Dendritic cell treated with granulocyte-macrophage colony-stimulating factor and Interleukin-4, amounts not matched to agents 40 ng/mL and 50 ng/mL, for 4 days (primary cell): ENCODE measurements at regions of chr7 and their contacts with region 1.

Region 1: DNA sequence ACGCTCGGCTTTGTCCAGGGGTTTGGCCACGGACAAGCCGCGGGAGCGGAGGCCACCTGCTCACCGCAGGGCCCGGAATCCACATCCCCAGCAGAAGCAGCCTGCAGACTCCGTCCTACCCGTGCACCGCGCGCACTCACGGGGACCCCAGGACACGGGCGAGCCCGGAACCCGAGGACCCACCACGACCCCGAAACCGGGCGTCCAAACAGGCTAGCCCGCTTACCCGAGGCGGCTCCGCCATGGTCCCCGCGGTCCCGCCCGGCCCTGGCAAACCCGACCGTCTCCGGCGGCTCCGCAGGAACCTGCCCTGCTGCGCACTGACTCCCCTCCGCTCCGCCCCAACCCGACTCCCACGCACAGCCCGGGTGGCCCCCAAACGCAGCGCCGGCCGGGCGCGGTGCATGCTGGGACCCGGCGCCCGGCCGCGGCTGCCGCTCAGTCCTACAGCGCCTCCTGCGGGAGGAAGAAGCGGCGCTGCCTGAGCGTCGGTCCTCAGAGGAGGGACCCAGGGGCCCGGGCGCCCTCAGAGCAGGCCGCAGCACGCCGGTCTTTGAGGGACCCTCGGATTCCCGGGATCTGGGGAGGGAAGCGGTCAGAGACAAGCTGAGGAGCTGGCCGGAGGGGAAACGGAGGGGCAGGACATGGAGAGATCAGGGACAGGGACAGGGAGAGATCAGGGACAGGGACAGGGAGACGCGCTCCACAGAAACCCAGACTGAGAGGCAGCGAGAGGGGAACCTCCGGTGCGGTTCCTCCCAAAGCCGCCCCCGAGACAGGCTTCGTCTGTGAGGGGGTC is at the start of gene ZNF786:
- H3K4me3 Mint-ChIP-seq: peak within 1 kb of the TSS; percentile 98
- H3K27ac Mint-ChIP-seq: peak within 1 kb of the TSS; percentile 90
- H3K4me1 Mint-ChIP-seq: peaks cover 42% of the 10 kb centered on the region
- H3K27me3 Mint-ChIP-seq: no peaks in the 10 kb centered on the region

Region 2: DNA sequence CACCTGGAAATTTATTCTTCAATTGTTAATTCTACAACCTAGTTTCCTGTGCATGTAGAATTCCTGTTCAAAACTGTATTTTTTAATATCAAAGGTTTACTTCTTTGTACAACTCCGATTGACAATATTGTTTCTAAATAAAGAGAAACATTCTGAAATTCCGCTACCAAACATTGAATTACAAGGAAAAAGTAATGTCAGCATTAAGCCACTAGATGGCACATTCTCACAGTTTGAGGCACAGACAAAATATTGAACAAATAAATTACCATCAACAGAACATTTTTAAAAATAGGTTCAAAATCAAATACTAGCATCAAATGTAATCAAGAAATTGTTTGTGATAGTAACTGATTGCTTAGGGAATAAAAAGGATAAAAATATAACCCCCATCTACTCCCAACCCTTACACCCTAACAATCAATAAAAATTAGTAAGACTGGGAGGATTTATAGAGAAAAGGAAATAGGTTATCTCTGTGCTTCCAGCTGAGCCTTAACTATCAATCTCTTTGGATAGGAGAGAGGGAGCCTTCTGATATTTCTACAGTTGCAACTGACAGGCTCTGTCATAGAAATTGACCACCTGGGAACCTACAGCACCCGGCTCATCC is 586.6 kb before region 1 on chr7:
- intact Hi-C with region 1: loop called (anchors 10 kb)
- H3K4me3 Mint-ChIP-seq: no peak overlapping the region
- H3K27ac Mint-ChIP-seq: no peak overlapping the region
- H3K4me1 Mint-ChIP-seq: peaks cover 8% of the 10 kb centered on the region
- H3K27me3 Mint-ChIP-seq: peaks cover 19% of the 10 kb centered on the region

Region 3: DNA sequence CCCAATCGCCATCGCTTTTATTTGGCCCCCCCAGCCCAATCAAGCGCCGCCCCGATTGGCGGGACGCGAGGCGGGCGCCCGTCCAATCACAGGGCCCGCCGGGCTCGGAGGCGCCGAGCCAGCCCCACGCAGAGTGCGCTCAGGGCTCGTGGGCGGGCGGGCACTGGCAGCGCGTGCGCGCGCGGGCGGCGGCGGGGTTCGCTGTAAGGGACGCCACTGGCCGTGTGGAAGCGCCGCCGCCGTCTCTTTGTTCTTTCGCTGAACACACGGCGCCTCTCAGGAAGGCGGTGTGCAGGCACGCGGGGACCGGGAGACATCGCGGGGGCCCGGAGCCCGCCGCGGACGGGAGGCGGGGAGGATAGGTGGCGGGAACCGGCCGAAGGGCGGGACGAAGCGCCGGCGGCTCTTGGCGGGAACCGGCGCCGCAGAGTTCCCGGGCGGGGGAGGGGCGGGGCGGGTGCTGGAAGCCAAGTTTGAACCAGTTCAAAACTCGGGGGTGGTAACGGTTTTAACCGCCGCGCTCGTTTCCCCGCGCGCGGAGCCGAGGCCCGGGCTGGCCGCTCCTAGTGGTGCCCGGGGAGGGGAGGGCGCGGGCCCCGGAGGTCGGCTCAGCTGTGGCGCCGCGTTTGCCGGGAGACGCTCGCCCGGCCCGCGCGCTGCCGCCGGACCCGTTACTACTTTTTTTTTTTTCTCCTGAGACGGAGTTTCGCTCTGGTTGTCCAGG is 206.1 kb before region 1 on chr7:
- intact Hi-C with region 1: loop called (anchors 5 kb)
- H3K4me3 Mint-ChIP-seq: peak overlapping the region; percentile 80
- H3K27ac Mint-ChIP-seq: peak overlapping the region; percentile 88
- H3K4me1 Mint-ChIP-seq: peaks cover 21% of the 10 kb centered on the region
- H3K27me3 Mint-ChIP-seq: no peaks in the 10 kb centered on the region

Region 4: DNA sequence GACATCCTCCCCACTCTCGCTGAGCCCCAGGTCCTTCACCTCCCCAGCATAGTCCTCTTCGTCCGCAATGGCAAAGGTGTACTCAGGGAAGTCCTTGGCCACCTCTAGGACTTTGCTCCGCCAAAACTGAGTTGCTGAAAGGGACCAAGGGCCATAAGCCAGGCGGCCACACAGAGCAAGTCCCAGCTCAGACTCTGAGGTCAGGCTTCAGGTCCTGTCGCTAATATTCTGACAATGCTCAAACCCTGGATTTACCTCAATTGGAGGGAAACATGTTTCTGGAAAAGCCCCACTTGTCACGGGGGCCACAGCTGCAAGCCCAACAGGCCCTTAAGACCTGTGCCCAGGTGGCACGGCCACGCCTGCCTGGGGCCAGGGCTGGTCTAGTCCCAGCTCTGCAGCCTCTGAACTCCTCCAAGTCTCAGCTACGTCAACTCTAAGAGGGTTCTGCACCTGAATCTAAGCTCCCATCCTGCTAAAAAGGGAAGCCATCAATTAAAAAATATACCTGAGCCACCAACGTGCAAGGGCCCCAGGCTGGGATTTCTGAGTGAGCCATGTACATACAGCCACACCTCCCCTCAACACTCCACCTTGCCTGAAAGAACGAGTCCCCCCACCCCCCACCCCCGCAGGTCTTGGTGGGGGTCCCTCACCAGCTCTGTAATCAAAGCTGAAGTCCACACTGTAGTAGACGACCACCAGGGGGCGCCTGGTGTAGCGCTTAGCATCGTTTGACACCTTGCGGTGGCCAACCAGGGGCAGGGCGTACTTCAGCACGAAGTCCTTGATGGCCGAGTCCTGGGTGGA is 85.2 kb before region 1 on chr7:
- intact Hi-C with region 1: loop called (anchors 1 kb)
- H3K4me3 Mint-ChIP-seq: no peak overlapping the region
- H3K27ac Mint-ChIP-seq: no peak overlapping the region
- H3K4me1 Mint-ChIP-seq: no peaks in the 10 kb centered on the region
- H3K27me3 Mint-ChIP-seq: no peaks in the 10 kb centered on the region

Region 5: DNA sequence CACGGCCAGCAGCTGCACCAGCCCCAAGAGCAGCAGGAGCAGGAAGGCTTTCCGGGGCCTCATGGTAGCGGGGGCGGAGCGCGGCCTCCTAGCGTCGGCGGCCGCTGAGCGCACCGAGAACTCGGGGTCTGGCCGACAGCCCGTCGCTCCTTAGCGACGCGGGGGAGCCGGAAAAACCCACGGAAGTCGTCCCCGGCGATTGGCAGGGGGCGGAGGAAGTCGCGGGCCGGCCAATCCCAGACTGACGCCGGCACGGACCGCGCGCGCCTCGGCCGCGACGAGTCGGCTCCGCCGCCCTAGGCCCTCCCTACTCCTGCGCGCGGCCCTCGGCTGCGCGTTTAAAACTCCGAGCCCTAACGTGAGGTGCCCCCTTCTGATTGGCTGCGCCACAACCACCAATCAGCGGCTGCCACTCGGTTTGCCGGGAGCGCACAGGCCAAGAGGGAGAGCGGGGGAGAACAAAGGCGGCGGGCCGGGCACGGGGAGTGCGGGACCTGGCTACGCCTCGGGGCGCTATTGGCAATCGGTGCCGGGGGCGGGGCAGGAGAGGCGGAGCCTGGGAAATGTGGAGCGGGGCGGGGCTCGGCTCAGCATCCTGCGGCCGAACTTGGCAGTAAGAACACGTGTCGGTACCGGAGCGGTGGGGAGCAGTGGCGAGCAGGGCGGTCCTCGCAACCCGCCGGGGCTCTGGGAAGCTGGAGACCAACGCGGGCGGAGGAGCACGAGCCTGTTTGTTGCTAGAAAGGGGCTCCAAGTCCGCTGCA is 62.1 kb before region 1 on chr7 and contains the start of gene PDIA4:
- intact Hi-C with region 1: loop called (anchors 2 kb)
- H3K4me3 Mint-ChIP-seq: peak within 1 kb of the TSS; percentile 96
- H3K27ac Mint-ChIP-seq: peak within 1 kb of the TSS; percentile 97
- H3K4me1 Mint-ChIP-seq: peaks cover 35% of the 10 kb centered on the region
- H3K27me3 Mint-ChIP-seq: peaks cover 5% of the 10 kb centered on the region

Region 6: DNA sequence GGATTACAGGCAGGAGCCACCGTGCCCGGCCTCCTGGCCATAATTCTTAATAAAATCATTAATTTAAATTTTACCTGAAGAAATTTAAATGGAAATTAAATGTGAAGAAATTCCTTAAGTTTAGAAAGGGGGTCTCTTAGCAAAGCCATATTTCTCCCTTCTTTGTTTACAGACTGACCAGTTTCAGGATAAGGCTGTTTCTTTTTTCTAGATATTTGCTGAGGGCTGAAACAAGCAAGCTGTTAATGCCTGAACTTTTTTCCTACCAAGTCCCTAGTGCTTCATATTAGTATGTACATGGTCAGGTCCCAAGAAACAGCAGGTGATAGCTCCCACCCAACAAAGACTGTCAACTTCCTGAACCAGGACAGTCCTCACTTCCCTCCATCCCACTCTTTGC is 44.2 kb before region 1 on chr7:
- intact Hi-C with region 1: no loop called
- H3K4me3 Mint-ChIP-seq: peak overlapping the region; percentile 17
- H3K27ac Mint-ChIP-seq: peak overlapping the region; percentile 85
- H3K4me1 Mint-ChIP-seq: peaks cover 27% of the 10 kb centered on the region
- H3K27me3 Mint-ChIP-seq: peaks cover 1% of the 10 kb centered on the region

Region 7: DNA sequence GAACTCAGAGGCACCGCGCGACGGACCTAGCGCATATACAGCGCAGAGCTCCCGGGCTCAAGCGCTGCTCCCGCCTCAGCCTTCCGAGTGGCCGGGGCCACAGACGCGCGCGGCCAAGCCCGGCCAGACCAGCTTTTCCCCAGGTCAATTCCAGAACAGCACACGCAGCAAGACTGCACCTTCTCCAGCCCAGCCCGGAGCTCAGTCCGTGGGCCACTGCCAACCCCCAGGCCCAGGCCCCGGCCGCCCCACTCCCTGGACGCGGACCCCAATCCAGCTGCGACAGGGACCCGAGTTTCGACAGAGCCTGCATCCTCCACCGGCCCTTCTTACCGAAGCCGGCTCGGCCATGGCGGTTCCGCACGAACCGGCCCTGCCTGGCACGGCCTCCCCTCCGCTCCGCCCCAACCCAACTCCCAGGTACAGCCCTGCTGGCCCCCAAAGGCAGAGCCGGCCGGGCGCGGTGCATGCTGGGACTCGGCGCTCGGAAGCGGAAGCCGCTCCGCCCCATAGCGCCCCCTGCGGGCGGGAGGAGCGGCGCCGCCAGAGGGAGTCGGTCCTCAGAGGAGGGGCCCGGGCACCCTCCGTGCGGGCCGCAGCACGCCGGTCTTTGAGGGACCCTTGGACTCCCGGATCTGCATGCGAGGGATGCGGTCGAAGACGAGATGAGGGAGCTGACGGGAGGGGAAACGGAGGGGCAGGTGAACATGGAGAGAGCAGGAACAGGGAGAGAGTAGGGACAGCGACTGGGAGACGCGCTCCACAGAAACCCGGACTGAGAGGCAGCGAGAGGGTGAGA is 35.5 kb after region 1 on chr7 and contains the start of gene ZNF425:
- intact Hi-C with region 1: loop called (anchors 2 kb)
- H3K4me3 Mint-ChIP-seq: peak within 1 kb of the TSS; percentile 99
- H3K27ac Mint-ChIP-seq: peak within 1 kb of the TSS; percentile 93
- H3K4me1 Mint-ChIP-seq: peaks cover 32% of the 10 kb centered on the region
- H3K27me3 Mint-ChIP-seq: peaks cover 4% of the 10 kb centered on the region

Region 8: GRCh38 chr7:149202831-149203231 is 112.2 kb after region 1 on chr7:
- intact Hi-C with region 1: no loop called
- H3K4me3 Mint-ChIP-seq: no peak overlapping the region
- H3K27ac Mint-ChIP-seq: no peak overlapping the region
- H3K4me1 Mint-ChIP-seq: peaks cover 18% of the 10 kb centered on the region
- H3K27me3 Mint-ChIP-seq: no peaks in the 10 kb centered on the region

Region 9: DNA sequence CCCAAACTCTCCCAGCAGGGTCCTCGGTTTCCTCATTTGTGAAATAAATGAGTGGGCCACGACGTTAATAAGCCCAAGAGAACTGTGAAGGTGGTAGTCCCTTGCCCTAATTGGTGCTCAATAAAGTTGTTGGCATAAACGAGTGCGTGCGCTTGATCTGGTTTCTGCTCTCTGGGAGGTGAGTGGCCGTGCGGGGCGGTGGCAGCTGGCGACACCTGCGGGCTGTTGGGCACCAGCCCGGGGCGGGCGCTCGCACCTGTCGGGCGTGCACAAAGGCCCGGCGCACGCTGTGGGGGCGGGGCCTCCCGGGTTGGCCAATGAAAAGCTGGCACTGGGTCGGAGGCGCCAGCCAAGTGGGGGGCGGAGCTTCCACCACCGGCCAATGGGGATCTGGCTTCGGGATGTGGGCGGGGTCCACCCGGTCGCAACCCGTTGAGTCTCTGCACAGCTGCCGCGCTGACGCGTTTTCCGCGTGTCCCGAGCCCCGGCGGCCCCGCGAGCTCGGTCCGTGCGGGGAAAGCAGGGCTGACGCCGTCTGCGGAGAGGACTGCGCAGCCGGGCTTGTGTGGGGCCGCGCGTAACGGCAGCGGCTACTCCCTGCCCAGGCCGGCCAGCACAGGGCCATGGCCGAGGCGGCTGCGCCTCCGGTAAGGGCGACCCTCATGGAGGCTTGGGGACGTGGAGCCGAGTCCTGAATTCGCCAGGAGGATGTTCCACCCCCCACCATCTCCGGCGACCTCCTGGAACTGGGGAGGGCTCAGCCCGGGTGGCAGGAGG is 194.4 kb after region 1 on chr7:
- intact Hi-C with region 1: no loop called
- H3K4me3 Mint-ChIP-seq: peak overlapping the region; percentile 76
- H3K27ac Mint-ChIP-seq: peak overlapping the region; percentile 58
- H3K4me1 Mint-ChIP-seq: peaks cover 21% of the 10 kb centered on the region
- H3K27me3 Mint-ChIP-seq: peaks cover 24% of the 10 kb centered on the region

Region 10: GRCh38 chr7:149642589-149642988 is 552.0 kb after region 1 on chr7:
- intact Hi-C with region 1: no loop called
- H3K4me3 Mint-ChIP-seq: no peak overlapping the region
- H3K27ac Mint-ChIP-seq: no peak overlapping the region
- H3K4me1 Mint-ChIP-seq: no peaks in the 10 kb centered on the region
- H3K27me3 Mint-ChIP-seq: peaks cover 2% of the 10 kb centered on the region